Breast epithelium (tissue), 4 donors: ENCODE measurements at regions of chr7 and their contacts with region 1.

Region 1: DNA sequence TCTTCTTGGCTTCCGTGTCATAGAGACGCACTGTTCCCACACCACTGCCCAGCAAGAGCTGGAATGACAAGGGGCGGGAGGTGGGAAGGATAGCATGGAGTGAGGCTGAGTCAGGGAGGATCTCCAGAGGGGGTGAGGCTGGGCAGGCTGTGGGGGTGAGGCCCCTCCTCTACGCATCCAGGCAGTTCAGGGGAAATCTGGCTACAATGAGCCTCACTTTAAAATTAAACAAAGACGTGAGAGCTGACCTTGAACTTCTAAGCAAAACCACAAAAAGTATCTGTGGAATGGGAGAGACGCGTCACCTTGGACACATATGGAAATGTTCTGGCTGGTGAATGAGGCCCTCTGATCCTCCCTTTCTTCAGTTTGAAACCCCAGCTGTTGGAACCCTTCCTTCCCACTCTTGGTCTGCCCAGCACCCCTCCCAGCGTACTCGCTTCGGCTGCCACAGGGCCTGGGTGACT is 17.7 kb downstream of the WDR91 start:
- DNase-seq: peak in 1 of 2 donors; percentile 63
- H3K4me3 ChIP-seq: no peak overlapping the region
- H3K27ac ChIP-seq: peak overlapping the region; percentile 73 to 84
- H3K4me1 ChIP-seq: no peaks in the 10 kb centered on the region
- H3K27me3 ChIP-seq: no peaks in the 10 kb centered on the region
- CTCF ChIP-seq: no peak
- POLR2A ChIP-seq: no peak

Region 2: DNA sequence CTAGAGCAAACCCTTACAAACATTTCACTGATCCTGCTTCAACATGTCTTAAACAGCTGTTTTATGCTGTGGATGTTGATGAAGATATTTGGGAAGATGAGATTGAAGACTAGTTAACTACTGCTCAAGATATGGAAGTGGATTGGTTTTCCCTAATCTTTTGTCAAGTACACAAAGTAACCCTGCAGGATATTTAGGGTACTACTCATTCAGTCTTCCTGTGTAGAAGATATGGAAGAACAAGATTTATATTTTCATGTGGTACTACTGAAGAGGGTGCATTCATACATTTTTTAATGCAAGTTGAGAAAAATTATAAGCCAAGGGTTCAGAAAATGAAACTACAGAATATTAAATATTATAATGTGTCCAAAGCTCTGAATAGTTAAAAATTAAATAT is 64.1 kb before region 1 on chr7:
- intact Hi-C with region 1: loop called (anchors 2 kb)
- DNase-seq: no peak
- H3K4me3 ChIP-seq: no peak overlapping the region
- H3K27ac ChIP-seq: no peak overlapping the region
- H3K4me1 ChIP-seq: no peaks in the 10 kb centered on the region
- H3K27me3 ChIP-seq: no peaks in the 10 kb centered on the region
- CTCF ChIP-seq: no peak
- POLR2A ChIP-seq: no peak

Region 3: DNA sequence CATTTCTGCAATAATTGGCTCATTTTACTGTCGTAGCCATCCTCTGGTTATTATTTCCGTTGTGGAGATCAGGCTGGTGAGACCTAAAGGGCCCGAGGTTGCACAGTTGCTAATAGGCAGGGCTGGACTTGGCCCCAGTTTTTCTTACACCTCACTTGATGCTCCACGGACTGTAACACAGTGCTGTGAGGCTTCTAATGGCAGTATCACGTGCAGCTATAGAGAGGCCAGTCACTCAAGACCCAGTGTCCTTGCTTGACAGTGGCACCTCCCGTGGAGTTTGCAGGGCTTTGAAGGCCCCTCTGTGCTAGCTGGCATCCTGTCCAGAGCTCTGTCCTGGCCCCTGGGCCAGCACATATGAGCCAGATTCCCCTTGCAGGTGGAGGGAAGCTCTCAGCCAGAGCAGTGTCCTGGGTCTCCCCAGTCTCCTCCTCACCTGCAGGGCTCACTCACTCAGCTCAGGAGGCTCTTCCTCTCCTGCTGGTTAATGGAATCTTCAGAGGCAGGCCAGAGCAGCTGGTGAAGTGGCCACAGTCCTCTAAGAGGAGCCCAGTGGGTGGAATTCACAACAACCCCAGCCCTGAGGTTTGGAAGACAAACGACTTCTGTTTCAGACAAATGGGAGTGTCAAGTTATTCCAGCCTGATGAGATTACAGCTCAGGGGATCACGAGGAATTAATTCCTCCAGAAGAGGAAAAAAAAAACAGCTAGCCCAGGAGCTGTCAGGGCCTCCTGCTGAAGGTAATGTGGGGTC is 669.1 kb after region 1 on chr7:
- intact Hi-C with region 1: no loop called
- DNase-seq: no peak
- H3K4me3 ChIP-seq: no peak overlapping the region
- H3K27ac ChIP-seq: no peak overlapping the region
- H3K4me1 ChIP-seq: no peaks in the 10 kb centered on the region
- H3K27me3 ChIP-seq: no peaks in the 10 kb centered on the region
- CTCF ChIP-seq: no peak
- POLR2A ChIP-seq: no peak

Region 4: GRCh38 chr7:136489808-136490207 is 1296.2 kb after region 1 on chr7:
- intact Hi-C with region 1: no loop called
- DNase-seq: no peak
- H3K4me3 ChIP-seq: no peak overlapping the region
- H3K27ac ChIP-seq: no peak overlapping the region
- H3K4me1 ChIP-seq: no peaks in the 10 kb centered on the region
- H3K27me3 ChIP-seq: no peaks in the 10 kb centered on the region
- CTCF ChIP-seq: no peak
- POLR2A ChIP-seq: no peak